ENCODE measurements at regions of chr4 and their contacts with region 1.

Region 1: GRCh38 chr4:37400241-37400881 is 155.8 kb downstream of the NWD2 start:
- DNase-seq: no peak
- ATAC-seq: no peak
- H3K4me3 ChIP-seq: no peak overlapping the region
- H3K4me3 Mint-ChIP-seq: no peak overlapping the region
- H3K27ac ChIP-seq: no peak overlapping the region
- H3K27ac Mint-ChIP-seq: no peak overlapping the region
- H3K4me1 ChIP-seq: no peaks in the 10 kb centered on the region
- H3K4me1 Mint-ChIP-seq: no peaks in the 10 kb centered on the region
- H3K27me3 ChIP-seq: peaks cover 0 to 3% (median 0%) of the 10 kb centered on the region in 4 experiments
- H3K27me3 Mint-ChIP-seq: peaks cover 27% of the 10 kb centered on the region
- CTCF ChIP-seq: no peak

Region 2: GRCh38 chr4:37389967-37390580 is 10.3 kb before region 1 on chr4:
- CTCF ChIA-PET with region 1: interaction called, 11 read pairs
- POLR2A ChIA-PET with region 1: no interaction called
- intact Hi-C with region 1: no loop called
- DNase-seq: peak; percentile 46
- ATAC-seq: no peak
- H3K4me3 ChIP-seq: no peak overlapping the region
- H3K4me3 Mint-ChIP-seq: no peak overlapping the region
- H3K27ac ChIP-seq: no peak overlapping the region
- H3K27ac Mint-ChIP-seq: no peak overlapping the region
- H3K4me1 ChIP-seq: no peaks in the 10 kb centered on the region
- H3K4me1 Mint-ChIP-seq: no peaks in the 10 kb centered on the region
- H3K27me3 ChIP-seq: no peaks in the 10 kb centered on the region
- H3K27me3 Mint-ChIP-seq: peaks cover 7% of the 10 kb centered on the region
- CTCF ChIP-seq: peak; percentile 77